ENCODE measurements at regions of chr10 and their contacts with region 1.

Region 1: GRCh38 chr10:110893559-110894179 is 21.9 kb downstream of the PDCD4 start:
- DNase-seq: no peak
- H3K4me3 ChIP-seq: no peak overlapping the region
- H3K27ac ChIP-seq: peak overlapping the region in 1 of 8 donors; percentile 5
- H3K4me1 ChIP-seq: peaks cover 0 to 87% (median 35%) of the 10 kb centered on the region in 6 donors
- H3K27me3 ChIP-seq: no peaks in the 10 kb centered on the region
- CTCF ChIP-seq: peak in 10 of 11 experiments; percentile 36 to 76 (median 66)
- POLR2A ChIP-seq: no peak

Region 2: DNA sequence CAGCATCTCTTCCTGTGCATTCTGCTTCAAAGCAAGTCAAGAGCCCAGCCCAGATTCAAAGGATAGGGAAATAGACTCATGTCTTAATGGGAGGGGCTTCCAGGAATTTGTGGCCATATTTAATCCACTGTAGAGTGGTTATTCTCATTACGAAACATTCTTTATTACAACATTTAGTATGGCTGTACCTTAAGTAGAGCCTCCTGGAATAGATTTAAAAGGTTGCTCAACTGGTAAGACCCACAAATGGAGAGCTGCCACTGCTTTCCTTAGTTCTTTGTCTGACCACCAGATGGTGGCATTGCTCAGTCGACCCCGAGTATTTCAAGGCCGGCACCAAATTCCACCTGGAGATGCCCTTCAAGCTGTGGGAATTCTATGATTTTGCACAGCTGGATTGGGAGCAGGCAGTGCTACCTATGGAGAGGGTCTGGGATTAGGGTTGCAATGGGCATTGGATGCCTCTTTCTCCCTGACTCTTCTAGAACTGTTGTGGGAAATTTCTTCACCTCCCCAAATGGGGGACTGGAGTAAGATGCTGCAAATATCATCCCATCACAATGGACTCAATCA is 147.3 kb before region 1 on chr10:
- intact Hi-C with region 1: loop called (anchors 5 kb)
- DNase-seq: no peak
- H3K4me3 ChIP-seq: no peak overlapping the region
- H3K27ac ChIP-seq: no peak overlapping the region
- H3K4me1 ChIP-seq: peaks cover 0 to 27% (median 10%) of the 10 kb centered on the region in 6 donors
- H3K27me3 ChIP-seq: no peaks in the 10 kb centered on the region
- CTCF ChIP-seq: peak; percentile 45 to 91 (median 79)
- POLR2A ChIP-seq: no peak

Region 3: DNA sequence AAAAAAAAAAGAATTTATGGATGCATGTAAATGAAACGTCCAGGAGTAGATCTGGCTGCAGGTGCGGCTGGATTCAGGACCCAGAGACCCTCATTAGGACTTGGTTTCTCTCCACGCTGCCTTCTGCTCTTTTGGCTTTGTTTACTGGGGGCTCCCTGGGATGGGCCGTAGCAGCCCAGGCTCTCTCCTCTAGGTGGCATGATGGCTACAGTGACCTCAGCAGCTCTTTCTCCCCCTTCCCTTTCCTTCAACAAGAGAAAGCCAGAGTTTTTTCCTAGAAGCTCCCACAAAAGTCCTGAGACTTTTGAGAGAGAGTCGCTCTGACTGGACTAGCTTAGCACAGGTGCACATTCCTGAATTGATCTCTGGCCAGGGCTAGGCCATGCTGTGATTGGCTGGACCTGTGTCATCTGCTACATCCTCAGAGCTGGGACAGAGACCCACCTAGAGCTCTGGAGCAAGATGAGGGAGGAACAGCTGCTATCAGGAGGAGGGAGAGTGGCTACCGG is 89.8 kb before region 1 on chr10:
- intact Hi-C with region 1: loop called (anchors 5 kb)
- DNase-seq: peak; percentile 79
- H3K4me3 ChIP-seq: peak overlapping the region in 1 of 8 donors; percentile 4
- H3K27ac ChIP-seq: peak overlapping the region in 4 of 8 donors; percentile 10 to 65 (median 56)
- H3K4me1 ChIP-seq: peaks cover 13 to 33% (median 25%) of the 10 kb centered on the region in 6 donors
- H3K27me3 ChIP-seq: no peaks in the 10 kb centered on the region
- CTCF ChIP-seq: peak; percentile 38 to 78 (median 71)
- POLR2A ChIP-seq: no peak

Region 4: GRCh38 chr10:111098679-111099437 is 205.2 kb after region 1 on chr10:
- intact Hi-C with region 1: no loop called
- DNase-seq: no peak
- H3K4me3 ChIP-seq: no peak overlapping the region
- H3K27ac ChIP-seq: no peak overlapping the region
- H3K4me1 ChIP-seq: no peaks in the 10 kb centered on the region
- H3K27me3 ChIP-seq: peaks cover 0 to 14% (median 0%) of the 10 kb centered on the region in 7 donors
- CTCF ChIP-seq: no peak
- POLR2A ChIP-seq: no peak

Measured in spleen (tissue), 13 donors.